ENCODE measurements at regions of chr5 and their contacts with region 1.

Region 1: DNA sequence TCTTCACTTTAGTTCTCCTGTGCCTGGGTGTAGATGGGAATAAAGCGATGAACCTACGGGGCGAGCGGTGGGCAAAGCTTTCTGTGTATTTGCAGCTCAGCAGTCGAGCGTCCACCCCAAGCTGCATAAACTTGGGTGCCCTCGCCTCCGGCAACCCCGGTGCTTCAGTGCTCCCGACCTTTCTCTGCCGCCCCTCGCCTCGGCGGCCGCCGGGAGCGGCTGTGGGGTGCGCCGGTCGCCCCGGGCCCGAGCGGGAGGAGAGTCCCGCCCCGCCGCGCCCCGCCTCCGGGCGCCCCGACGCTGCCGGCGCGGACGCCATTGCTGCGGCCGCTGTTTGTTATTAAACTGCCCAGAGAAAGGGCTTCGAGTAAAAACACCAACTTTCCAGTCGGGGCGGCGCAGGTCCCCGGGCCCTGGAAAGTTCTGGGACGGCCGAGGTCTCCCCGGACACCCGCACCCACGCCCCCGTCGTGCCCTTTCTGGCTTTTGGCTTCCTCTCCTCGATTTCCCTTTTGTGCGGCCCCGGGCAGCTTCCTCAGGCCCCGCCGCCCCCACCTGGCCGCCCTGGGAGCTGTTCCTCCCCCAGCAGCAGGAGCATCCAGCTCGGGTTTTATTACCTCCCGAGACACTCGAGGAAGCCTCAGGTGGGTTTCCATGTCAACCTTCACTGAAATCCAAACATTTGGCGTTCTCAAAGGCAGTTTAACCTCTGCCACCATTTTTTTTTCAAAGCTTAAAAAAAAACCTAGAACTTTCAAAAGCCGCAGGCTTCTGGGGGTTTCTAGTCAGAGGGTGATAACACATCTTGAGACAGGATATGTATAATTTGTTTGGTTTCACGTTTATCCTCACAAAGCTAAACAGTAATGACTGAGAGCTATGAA is 334.3 kb downstream of the CWC27 start:
- DNase-seq: peak; percentile 67 to 68
- H3K4me3 ChIP-seq: peak overlapping the region; percentile 36 to 56
- H3K27ac ChIP-seq: peak overlapping the region; percentile 67 to 87
- H3K4me1 ChIP-seq: no peaks in the 10 kb centered on the region
- H3K27me3 ChIP-seq: no peaks in the 10 kb centered on the region
- CTCF ChIP-seq: peak; percentile 38 to 59 (median 50)
- POLR2A ChIP-seq: no peak

Region 2: DNA sequence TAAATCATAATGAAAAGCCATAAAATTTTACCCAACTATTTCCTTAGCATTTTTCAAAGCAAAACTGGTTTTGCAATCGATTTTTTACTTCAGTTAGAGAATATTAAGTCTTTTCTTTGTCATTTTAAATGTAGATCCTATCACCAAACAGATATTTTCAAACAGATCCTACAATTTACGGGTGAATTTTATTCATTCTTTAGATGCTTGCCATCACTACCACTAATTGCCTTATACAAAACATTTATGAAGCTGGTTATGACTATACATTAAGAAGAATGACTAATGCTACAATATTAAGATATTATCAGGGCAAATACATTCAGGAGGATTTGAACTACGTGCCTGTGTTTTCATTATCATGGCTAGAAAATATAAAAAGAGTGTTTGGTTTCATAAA is 137.5 kb before region 1 on chr5:
- intact Hi-C with region 1: loop called (anchors 10 kb)
- DNase-seq: no peak
- H3K4me3 ChIP-seq: no peak overlapping the region
- H3K27ac ChIP-seq: no peak overlapping the region
- H3K4me1 ChIP-seq: no peaks in the 10 kb centered on the region
- H3K27me3 ChIP-seq: no peaks in the 10 kb centered on the region
- CTCF ChIP-seq: no peak
- POLR2A ChIP-seq: no peak

Region 3: DNA sequence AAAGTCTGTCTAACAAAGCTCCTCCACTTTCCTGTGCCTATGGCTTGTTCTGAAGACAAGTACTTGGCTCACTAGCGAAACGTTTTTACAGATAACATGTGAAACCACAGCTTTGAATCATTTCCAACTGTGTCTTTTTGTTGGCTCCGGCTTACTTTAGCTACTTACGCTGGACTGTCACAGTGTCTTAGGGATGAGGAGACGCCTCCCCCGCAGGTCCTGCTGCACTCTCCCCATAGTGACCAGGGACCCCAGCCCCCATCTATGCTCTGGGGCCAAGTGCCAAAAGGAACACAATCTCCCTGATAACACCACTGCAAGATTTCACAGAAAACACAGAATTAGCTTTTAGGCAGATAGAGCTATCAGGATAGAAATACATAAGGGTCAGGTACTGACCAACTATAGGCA is 159.6 kb after region 1 on chr5:
- intact Hi-C with region 1: no loop called
- DNase-seq: peak; percentile 13 to 15
- H3K4me3 ChIP-seq: no peak overlapping the region
- H3K27ac ChIP-seq: no peak overlapping the region
- H3K4me1 ChIP-seq: no peaks in the 10 kb centered on the region
- H3K27me3 ChIP-seq: no peaks in the 10 kb centered on the region
- CTCF ChIP-seq: no peak
- POLR2A ChIP-seq: no peak

Measured in uterus (tissue), 4 donors.